Activated B cell treated with CpG ODN at 0.5 μM for 24 hours (primary cell): ENCODE measurements at regions of chr1 and their contacts with region 1.

Region 1: GRCh38 chr1:37989361-37989930 is 376 bp downstream of the SF3A3 start:
- DNase-seq: no peak
- ATAC-seq: peak; percentile 26
- H3K4me3 Mint-ChIP-seq: peak overlapping the region; percentile 94
- H3K27ac Mint-ChIP-seq: peak overlapping the region; percentile 88
- H3K4me1 Mint-ChIP-seq: peaks cover 25% of the 10 kb centered on the region
- H3K27me3 Mint-ChIP-seq: peaks cover 2% of the 10 kb centered on the region
- CTCF ChIP-seq: no peak

Region 2: GRCh38 chr1:37807555-37808368 is 181.7 kb before region 1 on chr1 and contains the starts of genes C1orf122 and YRDC:
- CTCF ChIA-PET with region 1: no interaction called
- POLR2A ChIA-PET with region 1: no interaction called
- intact Hi-C with region 1: loop called (anchors 1 kb)
- DNase-seq: peak; percentile 93
- ATAC-seq: peak; percentile 89
- H3K4me3 Mint-ChIP-seq: peak within 1 kb of the TSS; percentile 95
- H3K27ac Mint-ChIP-seq: peak within 1 kb of the TSS; percentile 92
- H3K4me1 Mint-ChIP-seq: peaks cover 45% of the 10 kb centered on the region
- H3K27me3 Mint-ChIP-seq: no peaks in the 10 kb centered on the region
- CTCF ChIP-seq: no peak
- total RNA-seq, gene C1orf122: 18.8 and 19.9 TPM in 2 replicates
- total RNA-seq, gene YRDC: 20.6 and 24.2 TPM in 2 replicates

Region 3: GRCh38 chr1:37890378-37891014 is 99.0 kb before region 1 on chr1:
- CTCF ChIA-PET with region 1: no interaction called
- POLR2A ChIA-PET with region 1: no interaction called
- intact Hi-C with region 1: loop called (anchors 1 kb)
- DNase-seq: no peak
- ATAC-seq: peak; percentile 28
- H3K4me3 Mint-ChIP-seq: no peak overlapping the region
- H3K27ac Mint-ChIP-seq: peak overlapping the region; percentile 25
- H3K4me1 Mint-ChIP-seq: peaks cover 9% of the 10 kb centered on the region
- H3K27me3 Mint-ChIP-seq: no peaks in the 10 kb centered on the region
- CTCF ChIP-seq: no peak

Region 4: DNA sequence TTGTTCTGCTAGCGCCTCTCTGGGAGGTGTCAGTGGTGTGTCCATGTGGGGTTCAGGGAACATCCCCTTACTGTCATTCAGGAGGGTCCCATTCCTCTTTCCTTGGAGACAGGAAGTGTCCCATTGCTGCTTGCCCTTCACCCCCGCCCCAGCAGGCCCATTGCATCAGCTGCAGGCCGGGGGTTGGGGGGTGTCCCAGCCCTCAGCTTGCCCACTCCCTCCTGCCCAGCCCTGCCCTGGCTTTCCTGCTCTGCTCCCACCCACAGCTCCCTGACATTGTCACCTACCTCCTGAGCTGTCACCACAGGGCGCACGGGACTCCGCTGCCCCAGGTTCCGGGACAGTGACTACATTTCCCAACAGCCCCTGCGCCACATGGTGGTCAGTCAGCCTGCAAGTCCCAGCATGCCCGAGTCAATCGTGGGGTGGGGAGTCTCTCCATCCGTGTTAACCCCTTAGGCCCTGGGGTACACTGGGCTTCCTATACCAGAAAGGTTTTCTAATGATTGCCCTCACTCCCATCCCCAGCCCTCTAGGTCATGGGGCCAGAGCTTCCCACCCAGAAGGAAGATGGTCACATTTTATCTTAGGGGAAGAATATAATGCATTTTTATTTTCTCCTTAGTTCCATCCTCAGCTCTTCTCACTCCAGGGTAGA is 42.6 kb before region 1 on chr1 and contains the start of gene INPP5B:
- CTCF ChIA-PET with region 1: no interaction called
- POLR2A ChIA-PET with region 1: interaction called, 4 read pairs
- intact Hi-C with region 1: loop called (anchors 1 kb)
- DNase-seq: peak; percentile 74
- ATAC-seq: peak; percentile 100
- H3K4me3 Mint-ChIP-seq: peak within 1 kb of the TSS; percentile 100
- H3K27ac Mint-ChIP-seq: peak within 1 kb of the TSS; percentile 97
- H3K4me1 Mint-ChIP-seq: peaks cover 23% of the 10 kb centered on the region
- H3K27me3 Mint-ChIP-seq: no peaks in the 10 kb centered on the region
- CTCF ChIP-seq: no peak
- total RNA-seq, gene INPP5B: 63.4 and 70.3 TPM in 2 replicates

Region 5: DNA sequence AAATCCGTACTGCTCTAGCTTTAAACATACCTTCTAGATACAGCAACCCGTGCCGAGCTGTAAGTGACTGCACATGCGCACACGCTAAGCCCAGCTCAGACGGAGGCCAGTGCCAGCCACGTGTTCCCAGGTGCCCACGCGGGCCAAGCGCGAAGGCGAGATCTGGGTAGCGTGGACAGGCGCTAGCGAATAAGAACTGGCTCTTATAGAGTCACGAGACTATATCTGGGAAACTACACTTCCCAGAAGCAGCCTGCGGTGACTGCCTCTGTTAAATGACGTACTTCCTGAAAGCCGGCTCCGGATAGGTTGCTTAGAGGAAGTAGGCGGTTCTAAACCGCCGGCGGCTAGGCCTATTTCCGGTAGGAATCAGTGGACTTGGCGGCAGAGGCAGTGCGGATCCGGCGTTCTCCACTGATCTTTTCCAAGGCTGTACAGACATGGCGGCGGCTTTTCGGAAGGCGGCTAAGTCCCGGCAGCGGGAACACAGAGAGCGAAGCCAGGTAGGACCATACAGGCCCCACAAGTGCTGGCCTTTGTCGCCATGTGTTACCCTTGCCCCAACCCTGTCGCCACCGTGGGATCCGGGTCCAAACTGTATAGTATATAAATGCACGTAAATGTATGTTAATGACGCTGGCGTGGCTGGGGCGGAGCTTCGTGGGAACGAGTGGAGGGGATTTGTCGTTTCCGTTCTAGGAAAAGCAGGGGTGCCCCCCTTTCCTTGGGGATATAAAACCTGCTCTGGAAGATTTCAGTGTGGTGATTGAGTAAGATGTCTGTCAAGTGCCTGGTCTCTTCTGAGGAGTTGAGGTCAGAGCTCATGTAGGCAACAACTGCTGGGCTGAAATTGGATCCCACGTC is 23.1 kb after region 1 on chr1 and contains the start of gene UTP11:
- CTCF ChIA-PET with region 1: interaction called, 4 read pairs
- POLR2A ChIA-PET with region 1: interaction called, 8 read pairs
- intact Hi-C with region 1: loop called (anchors 1 kb)
- DNase-seq: peak; percentile 74
- ATAC-seq: peak; percentile 97
- H3K4me3 Mint-ChIP-seq: peak within 1 kb of the TSS; percentile 100
- H3K27ac Mint-ChIP-seq: peak within 1 kb of the TSS; percentile 94
- H3K4me1 Mint-ChIP-seq: peaks cover 27% of the 10 kb centered on the region
- H3K27me3 Mint-ChIP-seq: no peaks in the 10 kb centered on the region
- CTCF ChIP-seq: no peak
- total RNA-seq, gene UTP11: 26.1 and 28.6 TPM in 2 replicates

Region 6: GRCh38 chr1:38071312-38072256 is 82.1 kb after region 1 on chr1:
- CTCF ChIA-PET with region 1: no interaction called
- POLR2A ChIA-PET with region 1: no interaction called
- intact Hi-C with region 1: loop called (anchors 1 kb)
- DNase-seq: no peak
- ATAC-seq: peak; percentile 82
- H3K4me3 Mint-ChIP-seq: no peak overlapping the region
- H3K27ac Mint-ChIP-seq: no peak overlapping the region
- H3K4me1 Mint-ChIP-seq: peaks cover 4% of the 10 kb centered on the region
- H3K27me3 Mint-ChIP-seq: peaks cover 4% of the 10 kb centered on the region
- CTCF ChIP-seq: no peak

Region 7: DNA sequence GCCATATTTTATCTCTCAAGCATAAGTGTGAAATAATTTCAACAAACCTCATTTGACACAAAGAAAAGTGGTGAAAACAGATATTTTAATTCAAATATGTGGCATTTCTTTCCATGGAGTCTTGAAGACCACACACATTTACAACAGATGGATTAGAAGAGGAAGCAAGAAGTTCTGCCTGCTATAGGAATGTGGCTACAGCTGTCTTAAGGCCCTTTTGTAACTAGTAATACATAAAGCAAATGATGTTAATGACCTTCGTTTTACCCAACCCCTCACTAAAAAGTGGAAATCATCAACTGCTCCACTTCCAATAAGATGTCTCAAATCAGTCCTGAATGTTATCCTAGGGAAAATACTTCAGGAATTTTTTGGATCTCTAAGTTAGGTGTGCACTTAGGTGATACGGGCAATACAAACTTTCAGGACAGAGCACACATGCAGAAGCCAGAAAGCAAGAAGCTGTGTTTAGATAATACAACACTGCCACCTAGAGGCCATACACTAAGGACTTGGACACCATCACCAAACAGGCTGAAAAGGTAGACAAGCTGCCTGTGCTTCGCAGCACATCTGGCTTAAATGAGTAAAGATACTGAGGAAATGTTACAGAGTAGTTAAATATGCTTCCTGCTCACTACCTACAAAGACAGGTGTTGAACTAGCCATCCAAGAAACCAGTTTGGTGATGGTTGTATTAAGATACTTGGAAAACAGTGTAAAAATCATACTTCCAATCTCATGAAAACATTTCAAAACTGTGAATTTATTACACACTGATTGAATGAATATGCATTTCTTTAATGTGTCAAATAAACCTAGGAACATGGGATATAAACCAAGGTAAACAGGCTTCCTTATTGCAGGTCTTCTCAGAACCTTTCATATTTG is 845.7 kb after region 1 on chr1:
- CTCF ChIA-PET with region 1: interaction called, 3 read pairs
- POLR2A ChIA-PET with region 1: no interaction called
- intact Hi-C with region 1: loop called (anchors 1 kb)
- DNase-seq: no peak
- ATAC-seq: peak; percentile 82
- H3K4me3 Mint-ChIP-seq: no peak overlapping the region
- H3K27ac Mint-ChIP-seq: no peak overlapping the region
- H3K4me1 Mint-ChIP-seq: peaks cover 7% of the 10 kb centered on the region
- H3K27me3 Mint-ChIP-seq: peaks cover 10% of the 10 kb centered on the region
- CTCF ChIP-seq: no peak